HAP-1 (cell line): ENCODE measurements at regions of chr19 and their contacts with region 1.

Region 1: DNA sequence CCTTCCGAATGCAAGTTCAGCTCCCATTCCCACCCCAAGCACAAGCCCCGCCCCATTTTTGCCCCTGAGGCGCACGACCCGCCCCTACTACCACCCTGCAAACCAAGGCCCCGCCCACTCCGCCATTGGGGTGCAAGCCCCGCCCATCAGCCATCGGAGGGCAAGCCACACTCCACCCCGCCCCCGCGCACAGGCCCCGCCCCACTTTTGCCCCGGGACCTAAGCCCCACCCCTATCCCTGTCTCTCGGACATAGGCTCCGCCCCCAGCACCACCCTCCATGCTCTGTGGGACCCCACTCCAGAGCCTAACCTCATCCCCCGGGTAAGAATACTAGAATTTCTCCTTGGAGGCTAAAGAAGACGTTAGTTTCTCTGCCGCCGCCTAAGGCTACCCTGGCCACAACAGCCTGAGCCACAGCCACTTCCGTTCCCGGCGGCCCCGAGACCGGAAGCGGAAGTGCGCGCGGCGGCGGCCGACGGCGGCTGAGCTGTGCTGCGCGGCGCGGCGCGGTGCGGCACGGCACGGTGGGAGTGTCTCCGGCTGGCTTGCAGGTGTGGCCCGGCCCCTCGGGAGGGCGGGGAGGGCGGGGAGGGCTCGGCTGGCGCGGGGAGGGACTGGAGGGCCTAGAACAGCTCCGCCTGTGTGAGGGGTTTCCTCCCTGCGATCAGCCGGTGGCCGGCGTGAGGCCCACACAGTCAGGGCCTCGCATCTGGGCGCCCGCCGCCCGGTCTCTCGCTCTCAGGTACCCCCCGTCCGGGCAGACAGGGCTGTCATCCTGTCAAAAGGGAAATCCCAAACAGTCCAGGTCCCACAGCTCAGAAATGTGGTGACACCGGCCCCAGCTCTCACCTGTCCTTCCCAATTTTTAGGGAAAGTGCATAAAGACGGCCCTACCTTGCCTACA is at the start of gene ZNF333:
- DNase-seq: peak; percentile 86 to 100
- H3K4me3 ChIP-seq: peak within 1 kb of the TSS; percentile 61
- H3K4me1 ChIP-seq: peaks cover 9% of the 10 kb centered on the region
- H3K27me3 ChIP-seq: no peaks in the 10 kb centered on the region

Region 2: GRCh38 chr19:14571695-14572490 is 118.0 kb before region 1 on chr19 and contains the start of gene NDUFB7:
- in situ Hi-C with region 1: loop called (anchors 5 kb)
- DNase-seq: peak; percentile 93 to 95
- H3K4me3 ChIP-seq: peak within 1 kb of the TSS; percentile 96
- H3K4me1 ChIP-seq: no peaks in the 10 kb centered on the region; the same call in 1 of the 2 replicates
- H3K27me3 ChIP-seq: no peaks in the 10 kb centered on the region

Region 3: GRCh38 chr19:14746886-14747285 is 57.0 kb after region 1 on chr19:
- in situ Hi-C with region 1: no loop called
- DNase-seq: no peak
- H3K4me3 ChIP-seq: no peak overlapping the region
- H3K4me1 ChIP-seq: no peaks in the 10 kb centered on the region
- H3K27me3 ChIP-seq: no peaks in the 10 kb centered on the region